Ovary (tissue), 10 donors: ENCODE measurements at regions of chr13 and their contacts with region 1.

Region 1: GRCh38 chr13:75025956-75026355 is 456.0 kb downstream of the TBC1D4 start:
- DNase-seq: no peak
- H3K4me3 ChIP-seq: no peak overlapping the region
- H3K27ac ChIP-seq: no peak overlapping the region
- H3K4me1 ChIP-seq: no peaks in the 10 kb centered on the region
- H3K27me3 ChIP-seq: no peaks in the 10 kb centered on the region
- CTCF ChIP-seq: no peak
- EP300 ChIP-seq: no peak
- POLR2A ChIP-seq: no peak

Region 2: DNA sequence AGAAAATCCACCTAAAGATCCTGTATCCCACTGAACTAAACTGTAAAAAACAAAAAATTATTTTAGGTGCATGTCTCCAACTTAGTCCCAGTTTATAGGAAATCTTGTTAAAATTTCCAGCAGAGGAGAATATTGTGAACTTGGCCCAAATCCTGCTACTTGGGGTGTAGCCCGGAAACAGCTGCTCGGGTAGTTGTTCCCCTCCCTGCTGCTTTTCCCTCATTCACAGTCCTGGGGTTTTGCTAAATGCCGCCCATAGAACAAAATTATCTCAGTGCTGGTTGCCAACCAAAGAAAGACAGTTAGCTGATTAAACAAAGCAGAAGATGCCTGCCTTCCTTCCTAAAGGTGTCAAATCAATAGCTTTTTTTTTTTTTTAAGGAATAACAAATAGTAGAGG is 561.3 kb before region 1 on chr13:
- intact Hi-C with region 1: no loop called
- DNase-seq: no peak
- H3K4me3 ChIP-seq: no peak overlapping the region
- H3K27ac ChIP-seq: no peak overlapping the region
- H3K4me1 ChIP-seq: no peaks in the 10 kb centered on the region
- H3K27me3 ChIP-seq: no peaks in the 10 kb centered on the region
- CTCF ChIP-seq: no peak
- EP300 ChIP-seq: no peak
- POLR2A ChIP-seq: no peak

Region 3: DNA sequence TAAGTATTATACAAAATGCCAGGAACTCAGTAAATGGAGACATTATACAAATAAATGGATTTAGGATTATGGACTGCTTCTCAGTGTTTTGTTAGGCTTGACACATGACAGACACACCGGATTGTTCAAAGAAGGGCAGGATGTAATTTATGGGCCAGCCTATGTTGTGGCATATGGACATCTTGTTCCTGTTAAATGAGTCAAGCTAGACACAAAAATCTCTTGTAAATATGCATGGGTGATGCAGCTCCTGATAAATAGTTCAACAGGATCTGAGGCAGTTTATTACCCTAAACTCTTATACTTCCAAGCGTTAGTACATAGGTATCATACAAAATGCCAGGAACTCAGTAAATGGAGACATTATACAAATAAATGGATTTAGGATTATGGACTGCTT is 46.3 kb before region 1 on chr13:
- intact Hi-C with region 1: loop called in 1 of 4 experiments (anchors 2 kb)
- DNase-seq: no peak
- H3K4me3 ChIP-seq: no peak overlapping the region
- H3K27ac ChIP-seq: no peak overlapping the region
- H3K4me1 ChIP-seq: no peaks in the 10 kb centered on the region
- H3K27me3 ChIP-seq: no peaks in the 10 kb centered on the region
- CTCF ChIP-seq: no peak
- EP300 ChIP-seq: no peak
- POLR2A ChIP-seq: no peak

Region 4: DNA sequence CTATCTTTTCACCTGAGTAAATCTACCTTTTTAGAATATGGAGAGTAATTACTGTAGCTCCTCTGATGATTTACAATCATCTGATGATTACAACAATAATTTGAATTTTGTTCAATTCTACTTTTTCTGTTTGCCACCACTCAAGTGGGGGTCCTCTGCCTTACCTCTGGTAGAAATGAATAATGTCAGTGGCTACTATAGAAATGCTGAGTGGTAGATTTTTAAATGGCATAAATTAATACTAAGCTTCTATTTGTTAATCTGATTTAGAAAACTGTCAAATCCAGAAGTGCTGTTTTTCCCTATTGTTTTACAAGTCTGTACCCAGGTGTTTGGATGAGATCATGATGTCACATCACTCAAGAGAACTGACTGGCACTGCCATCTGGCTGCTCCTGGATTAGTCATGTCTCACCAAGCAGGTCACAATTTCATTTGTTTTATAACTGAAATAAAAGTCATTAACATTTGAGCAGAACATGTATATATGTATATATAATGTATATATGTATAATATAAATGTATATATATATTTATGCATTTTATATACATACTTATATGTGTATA is 38.7 kb before region 1 on chr13:
- intact Hi-C with region 1: loop called in 1 of 4 experiments (anchors 1 kb)
- DNase-seq: no peak
- H3K4me3 ChIP-seq: no peak overlapping the region
- H3K27ac ChIP-seq: no peak overlapping the region
- H3K4me1 ChIP-seq: no peaks in the 10 kb centered on the region
- H3K27me3 ChIP-seq: no peaks in the 10 kb centered on the region
- CTCF ChIP-seq: no peak
- EP300 ChIP-seq: no peak
- POLR2A ChIP-seq: no peak